Ovary (tissue), 10 donors: ENCODE measurements at regions of chr14 and their contacts with region 1.

Region 1: GRCh38 chr14:61822458-61822857 is 60.2 kb downstream of the SNAPC1 start:
- DNase-seq: no peak
- H3K4me3 ChIP-seq: no peak overlapping the region
- H3K27ac ChIP-seq: no peak overlapping the region
- H3K4me1 ChIP-seq: no peaks in the 10 kb centered on the region
- H3K27me3 ChIP-seq: no peaks in the 10 kb centered on the region
- CTCF ChIP-seq: no peak
- EP300 ChIP-seq: no peak
- POLR2A ChIP-seq: no peak

Region 2: DNA sequence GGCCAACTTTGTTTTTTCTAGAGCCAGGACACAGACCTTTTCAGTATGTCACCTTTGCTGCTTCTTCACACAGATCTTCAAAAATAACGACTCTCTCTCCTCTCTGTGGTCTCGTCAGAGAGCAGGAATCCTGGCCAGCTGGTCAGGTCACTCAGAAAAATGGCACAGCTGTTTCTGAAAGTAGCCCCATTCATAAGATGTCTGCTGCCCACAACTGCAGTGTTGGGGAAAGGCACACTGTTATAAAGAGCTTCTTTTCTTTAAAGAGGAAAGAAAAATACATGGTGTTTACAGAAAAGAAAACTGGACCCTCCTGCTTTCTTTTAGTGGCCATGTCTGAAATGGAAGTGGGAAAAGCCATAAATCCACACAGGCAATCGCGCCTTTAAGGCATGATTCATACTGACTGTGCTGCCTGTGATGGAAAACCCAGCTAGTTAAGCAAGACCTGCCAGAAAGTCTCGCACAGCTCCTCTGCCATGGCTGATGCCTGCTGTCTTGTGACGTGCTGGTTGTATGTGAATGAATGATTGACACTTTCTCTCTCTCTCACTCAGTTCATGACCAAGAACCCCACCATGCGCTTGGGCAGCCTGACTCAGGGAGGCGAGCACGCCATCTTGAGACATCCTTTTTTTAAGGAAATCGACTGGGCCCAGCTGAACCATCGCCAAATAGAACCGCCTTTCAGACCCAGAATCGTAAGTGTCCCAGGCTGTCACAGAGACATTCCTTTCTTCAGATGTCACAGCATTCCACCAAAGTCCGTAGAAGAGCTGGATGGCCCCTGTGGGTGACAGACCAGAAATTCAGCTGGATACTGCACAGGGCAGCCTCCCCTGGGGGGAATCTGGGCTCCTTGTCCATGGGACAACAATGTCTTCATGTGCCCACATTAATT is 275.0 kb before region 1 on chr14:
- intact Hi-C with region 1: no loop called
- DNase-seq: no peak
- H3K4me3 ChIP-seq: no peak overlapping the region
- H3K27ac ChIP-seq: no peak overlapping the region
- H3K4me1 ChIP-seq: peaks cover 11% of the 10 kb centered on the region
- H3K27me3 ChIP-seq: no peaks in the 10 kb centered on the region
- CTCF ChIP-seq: no peak
- EP300 ChIP-seq: no peak
- POLR2A ChIP-seq: no peak

Region 3: GRCh38 chr14:61659568-61659967 is 162.9 kb before region 1 on chr14:
- intact Hi-C with region 1: loop called in 1 of 4 experiments (anchors 5 kb)
- DNase-seq: no peak
- H3K4me3 ChIP-seq: no peak overlapping the region
- H3K27ac ChIP-seq: no peak overlapping the region
- H3K4me1 ChIP-seq: peaks cover 2% of the 10 kb centered on the region
- H3K27me3 ChIP-seq: no peaks in the 10 kb centered on the region
- CTCF ChIP-seq: no peak
- EP300 ChIP-seq: no peak
- POLR2A ChIP-seq: no peak

Region 4: GRCh38 chr14:62213516-62213915 is 391.1 kb after region 1 on chr14:
- intact Hi-C with region 1: no loop called
- DNase-seq: no peak
- H3K4me3 ChIP-seq: no peak overlapping the region
- H3K27ac ChIP-seq: no peak overlapping the region
- H3K4me1 ChIP-seq: no peaks in the 10 kb centered on the region
- H3K27me3 ChIP-seq: no peaks in the 10 kb centered on the region
- CTCF ChIP-seq: no peak
- EP300 ChIP-seq: no peak
- POLR2A ChIP-seq: no peak